H1 (cell line): ENCODE measurements at regions of chr10 and their contacts with region 1.

Region 1: DNA sequence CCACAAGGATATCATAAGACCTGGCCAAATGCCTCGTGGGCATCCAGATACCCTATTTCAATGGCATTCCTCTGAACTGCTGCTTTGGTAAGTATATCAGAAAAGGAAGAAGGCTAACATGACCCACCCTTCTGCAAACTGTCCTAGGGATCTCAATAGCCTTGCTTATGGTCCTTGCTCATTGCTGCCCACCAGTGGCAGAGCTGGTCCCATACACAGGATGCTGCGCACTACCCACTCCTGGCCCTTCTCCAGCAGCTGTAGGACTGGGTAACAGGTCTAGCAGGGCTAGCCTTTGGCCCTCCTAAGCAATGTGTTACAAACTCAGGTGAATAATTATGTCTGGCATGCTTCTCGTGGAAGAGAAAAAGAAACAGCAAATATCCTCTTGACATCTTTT is 72.5 kb downstream of the C10orf90 start:
- DNase-seq: peak in 1 of 2 experiments; percentile 66
- H3K4me3 ChIP-seq: no peak overlapping the region
- H3K27ac ChIP-seq: no peak overlapping the region
- H3K4me1 ChIP-seq: peaks cover 6 to 10% (median 9%) of the 10 kb centered on the region in 4 experiments
- H3K27me3 ChIP-seq: no peaks in the 10 kb centered on the region
- CTCF ChIP-seq: peak; percentile 86 to 94 (median 93)
- EP300 ChIP-seq: no peak
- POLR2A ChIP-seq: no peak
- RAD21 ChIP-seq: peak; percentile 73 to 87

Region 2: DNA sequence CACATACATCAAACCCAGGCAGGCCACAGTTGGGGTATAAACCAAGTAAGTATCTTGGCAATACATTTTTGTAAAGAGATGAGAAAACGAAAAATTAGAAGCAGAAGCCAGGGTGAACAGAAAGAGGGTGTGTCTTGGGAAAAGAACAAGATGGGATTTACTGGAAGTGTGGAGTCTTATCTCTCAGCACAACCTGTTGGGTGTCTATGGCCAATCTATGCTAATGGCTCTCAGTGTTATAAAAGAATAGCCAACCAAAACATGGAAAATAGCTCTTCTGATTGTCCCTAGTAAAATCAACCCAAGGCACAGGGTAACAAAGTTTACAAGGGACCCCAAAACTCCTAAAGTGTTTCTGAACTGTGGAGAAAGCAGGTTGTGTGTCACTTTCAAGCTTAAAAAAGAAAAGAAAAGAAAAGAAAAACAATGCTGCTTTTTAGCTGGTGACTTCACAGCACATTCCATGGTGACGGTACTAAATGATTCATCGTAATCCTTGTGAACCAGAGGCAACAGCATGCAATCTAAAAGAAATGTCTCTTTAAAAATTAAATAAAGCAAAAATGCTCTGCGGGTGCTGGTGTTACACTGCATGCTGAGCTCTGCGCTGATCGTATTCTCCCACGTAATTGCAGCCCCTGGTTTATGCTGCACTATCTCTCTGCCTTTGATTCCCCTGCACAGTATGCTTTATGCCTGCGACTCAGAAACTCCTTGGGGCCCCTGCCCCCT is 28.3 kb before region 1 on chr10:
- CTCF ChIA-PET with region 1: interaction called, 12 read pairs
- POLR2A ChIA-PET with region 1: no interaction called
- DNase-seq: no peak
- H3K4me3 ChIP-seq: no peak overlapping the region
- H3K27ac ChIP-seq: no peak overlapping the region
- H3K4me1 ChIP-seq: peaks cover 7 to 11% (median 9%) of the 10 kb centered on the region in 4 experiments; a peak in 5 of 7 replicates
- H3K27me3 ChIP-seq: no peaks in the 10 kb centered on the region
- CTCF ChIP-seq: no peak
- EP300 ChIP-seq: no peak
- POLR2A ChIP-seq: no peak
- RAD21 ChIP-seq: no peak

Region 3: DNA sequence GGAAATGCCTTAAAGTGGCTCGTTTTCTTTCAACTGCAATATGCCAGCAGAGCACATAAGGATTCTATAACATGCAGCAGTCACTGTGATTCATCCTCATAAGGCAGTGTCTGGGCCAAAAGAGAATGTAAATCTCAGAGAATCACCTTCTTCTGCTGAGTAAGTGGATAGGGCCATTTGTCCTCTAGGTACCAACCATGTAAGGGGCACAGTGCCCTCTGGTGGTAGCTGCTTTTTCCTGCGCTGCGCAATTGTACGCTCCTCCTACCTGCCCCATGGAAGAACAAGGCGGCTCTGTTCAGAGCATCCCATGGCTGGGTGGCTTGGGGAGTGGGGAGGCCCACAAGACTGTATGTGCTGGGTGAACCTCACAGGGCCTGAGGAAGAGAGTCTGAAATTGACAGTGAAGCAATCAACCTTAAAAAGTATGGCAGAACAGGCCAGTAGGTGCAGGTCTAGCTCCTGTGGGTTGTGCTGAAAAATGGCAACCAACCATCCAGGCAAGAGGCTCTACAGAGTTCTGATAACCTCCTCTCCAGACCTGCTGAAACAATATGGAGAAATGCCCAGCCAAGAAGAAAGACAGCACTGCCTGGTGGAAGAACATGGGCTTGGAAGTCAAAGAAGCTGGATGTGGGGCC is 151.1 kb after region 1 on chr10:
- CTCF ChIA-PET with region 1: interaction called, 11 read pairs
- POLR2A ChIA-PET with region 1: no interaction called
- DNase-seq: peak; percentile 67 to 97
- H3K4me3 ChIP-seq: no peak overlapping the region
- H3K27ac ChIP-seq: no peak overlapping the region
- H3K4me1 ChIP-seq: no peaks in the 10 kb centered on the region
- H3K27me3 ChIP-seq: no peaks in the 10 kb centered on the region; a peak in 1 of 7 replicates
- CTCF ChIP-seq: peak; percentile 84 to 95 (median 91)
- EP300 ChIP-seq: no peak
- POLR2A ChIP-seq: no peak
- RAD21 ChIP-seq: peak; percentile 92 to 94

Region 4: DNA sequence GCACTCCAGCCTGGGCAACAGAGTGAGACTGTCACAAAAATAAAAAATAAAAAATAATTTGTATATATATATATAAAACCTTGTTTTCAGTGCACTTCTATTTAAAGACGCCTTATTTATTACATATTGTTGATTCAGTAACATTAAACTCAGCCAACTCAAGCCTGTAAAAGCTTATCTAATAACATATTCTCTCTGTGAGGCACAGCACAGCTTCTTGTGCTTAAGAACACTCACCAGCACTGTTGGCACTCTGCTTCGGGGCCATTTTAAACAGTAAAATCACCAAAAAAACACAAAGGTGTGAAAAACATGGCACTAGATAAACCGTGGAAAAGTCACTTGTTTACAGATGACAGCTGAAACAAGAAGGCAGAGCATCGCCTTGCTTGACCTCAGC is 161.5 kb after region 1 on chr10:
- CTCF ChIA-PET with region 1: no interaction called
- POLR2A ChIA-PET with region 1: no interaction called
- DNase-seq: no peak
- H3K4me3 ChIP-seq: no peak overlapping the region
- H3K27ac ChIP-seq: no peak overlapping the region
- H3K4me1 ChIP-seq: no peaks in the 10 kb centered on the region
- H3K27me3 ChIP-seq: no peaks in the 10 kb centered on the region
- CTCF ChIP-seq: no peak
- EP300 ChIP-seq: no peak
- POLR2A ChIP-seq: no peak
- RAD21 ChIP-seq: no peak